ENCODE measurements at regions of chr19 and their contacts with region 1.

Region 1: GRCh38 chr19:4246767-4247593 is at the start of gene YJU2:
- DNase-seq: peak; percentile 98 to 100 (median 99)
- H3K4me3 ChIP-seq: peak within 1 kb of the TSS; percentile 88 to 89
- H3K4me3 Mint-ChIP-seq: peak within 1 kb of the TSS; percentile 91 to 98 (median 96)
- H3K27ac ChIP-seq: peak within 1 kb of the TSS; percentile 99
- H3K27ac Mint-ChIP-seq: peak within 1 kb of the TSS; percentile 97 to 100 (median 99)
- H3K4me1 ChIP-seq: peaks cover 16% of the 10 kb centered on the region
- H3K4me1 Mint-ChIP-seq: peaks cover 6 to 31% (median 20%) of the 10 kb centered on the region in 4 donors
- H3K27me3 ChIP-seq: no peaks in the 10 kb centered on the region
- H3K27me3 Mint-ChIP-seq: peaks cover 0 to 2% of the 10 kb centered on the region in 2 donors
- total RNA-seq, gene YJU2: 28.1 to 29.4 TPM

Region 2: GRCh38 chr19:4007021-4007835 is 239.8 kb before region 1 on chr19 and contains the start of gene PIAS4:
- CTCF ChIA-PET with region 1: no interaction called
- POLR2A ChIA-PET with region 1: no interaction called
- intact Hi-C with region 1: loop called (anchors 1 kb)
- DNase-seq: peak; percentile 95 to 97 (median 95)
- H3K4me3 ChIP-seq: peak within 1 kb of the TSS; percentile 47 to 73
- H3K4me3 Mint-ChIP-seq: peak within 1 kb of the TSS; percentile 83 to 92 (median 89)
- H3K27ac ChIP-seq: peak within 1 kb of the TSS; percentile 63
- H3K27ac Mint-ChIP-seq: peak within 1 kb of the TSS; percentile 81 to 91 (median 86)
- H3K4me1 ChIP-seq: peaks cover 42% of the 10 kb centered on the region
- H3K4me1 Mint-ChIP-seq: peaks cover 11 to 33% (median 18%) of the 10 kb centered on the region in 4 donors
- H3K27me3 ChIP-seq: no peaks in the 10 kb centered on the region
- H3K27me3 Mint-ChIP-seq: no peaks in the 10 kb centered on the region
- total RNA-seq, gene PIAS4: 38.6 to 42.6 TPM

Region 3: DNA sequence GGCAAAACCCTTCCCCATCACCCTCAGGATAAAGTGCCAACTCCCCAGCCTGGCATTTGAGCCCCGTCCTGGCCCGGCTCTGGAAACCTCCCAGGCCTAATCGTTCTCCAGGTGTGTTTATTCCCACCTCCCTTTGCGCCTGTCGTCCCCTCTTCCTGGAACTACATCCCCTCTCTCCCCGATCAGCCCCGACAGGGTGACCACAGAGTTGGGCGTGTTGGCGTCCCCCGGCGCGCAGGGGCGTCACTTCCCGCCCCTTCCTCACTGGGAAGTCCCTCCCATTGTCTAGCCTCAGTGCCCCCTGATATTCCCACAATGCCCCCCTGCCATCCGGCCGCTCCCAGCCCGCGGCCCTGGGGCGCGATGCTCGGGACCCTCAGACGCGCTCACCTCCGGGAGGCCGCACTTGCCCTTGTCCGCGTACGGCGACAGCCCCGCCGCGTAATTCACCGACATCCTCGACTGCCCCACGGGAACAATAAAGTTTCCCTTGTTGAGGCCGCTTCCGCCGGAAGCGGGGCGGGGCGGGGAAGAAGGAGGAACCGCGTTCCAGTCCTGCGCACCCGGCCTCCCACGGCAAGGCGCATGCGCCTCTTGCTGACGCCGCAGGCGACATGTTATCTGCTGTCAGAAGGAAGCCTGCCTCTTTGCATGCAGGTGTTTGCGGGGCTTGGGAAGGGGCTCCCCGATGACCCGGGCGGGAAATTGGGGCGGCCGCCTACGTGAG is 64.7 kb before region 1 on chr19 and contains the starts of genes ANKRD24 and SIRT6:
- CTCF ChIA-PET with region 1: interaction called, 3 read pairs
- POLR2A ChIA-PET with region 1: interaction called, 4 read pairs
- intact Hi-C with region 1: loop called (anchors 1 kb)
- DNase-seq: peak; percentile 95 to 96 (median 96)
- H3K4me3 ChIP-seq: peak within 1 kb of the TSS; percentile 91 to 97
- H3K4me3 Mint-ChIP-seq: peak within 1 kb of the TSS; percentile 94 to 99 (median 96)
- H3K27ac ChIP-seq: peak within 1 kb of the TSS; percentile 81
- H3K27ac Mint-ChIP-seq: peak within 1 kb of the TSS; percentile 92 to 100 (median 96)
- H3K4me1 ChIP-seq: peaks cover 27% of the 10 kb centered on the region
- H3K4me1 Mint-ChIP-seq: peaks cover 30 to 41% (median 33%) of the 10 kb centered on the region in 4 donors
- H3K27me3 ChIP-seq: no peaks in the 10 kb centered on the region
- H3K27me3 Mint-ChIP-seq: peaks cover 0 to 3% of the 10 kb centered on the region in 2 donors
- total RNA-seq, gene ANKRD24: 1.9 to 2.9 TPM
- total RNA-seq, gene SIRT6: 26.8 to 27.0 TPM

Region 4: GRCh38 chr19:4457654-4458395 is 210.8 kb after region 1 on chr19 and contains the start of gene UBXN6:
- CTCF ChIA-PET with region 1: no interaction called
- POLR2A ChIA-PET with region 1: interaction called, 10 read pairs
- intact Hi-C with region 1: loop called (anchors 1 kb)
- DNase-seq: peak; percentile 97 to 99 (median 98)
- H3K4me3 ChIP-seq: peak within 1 kb of the TSS; percentile 42 to 52
- H3K4me3 Mint-ChIP-seq: peak within 1 kb of the TSS; percentile 89 to 94 (median 91)
- H3K27ac ChIP-seq: peak within 1 kb of the TSS; percentile 62
- H3K27ac Mint-ChIP-seq: peak within 1 kb of the TSS; percentile 90 to 97 (median 96)
- H3K4me1 ChIP-seq: peaks cover 16% of the 10 kb centered on the region
- H3K4me1 Mint-ChIP-seq: peaks cover 11 to 26% (median 17%) of the 10 kb centered on the region in 4 donors
- H3K27me3 ChIP-seq: no peaks in the 10 kb centered on the region
- H3K27me3 Mint-ChIP-seq: peaks cover 0 to 2% of the 10 kb centered on the region in 2 donors
- total RNA-seq, gene UBXN6: 61.3 to 63.5 TPM

Region 5: GRCh38 chr19:4471403-4472173 is 224.6 kb after region 1 on chr19:
- CTCF ChIA-PET with region 1: interaction called, 4 read pairs
- POLR2A ChIA-PET with region 1: interaction called, 17 read pairs
- intact Hi-C with region 1: loop called (anchors 1 kb)
- DNase-seq: peak; percentile 96 to 100 (median 99)
- H3K4me3 ChIP-seq: peak overlapping the region; percentile 27 to 68
- H3K4me3 Mint-ChIP-seq: no peak overlapping the region
- H3K27ac ChIP-seq: peak overlapping the region; percentile 74
- H3K27ac Mint-ChIP-seq: no peak overlapping the region
- H3K4me1 ChIP-seq: peaks cover 30% of the 10 kb centered on the region
- H3K4me1 Mint-ChIP-seq: peaks cover 9 to 26% (median 16%) of the 10 kb centered on the region in 4 donors
- H3K27me3 ChIP-seq: no peaks in the 10 kb centered on the region
- H3K27me3 Mint-ChIP-seq: no peaks in the 10 kb centered on the region

Measured in CD4-positive, alpha-beta memory T cell (primary cell).